K562 (cell line): ENCODE measurements at regions of chr12 and their contacts with region 1.

Region 1: DNA sequence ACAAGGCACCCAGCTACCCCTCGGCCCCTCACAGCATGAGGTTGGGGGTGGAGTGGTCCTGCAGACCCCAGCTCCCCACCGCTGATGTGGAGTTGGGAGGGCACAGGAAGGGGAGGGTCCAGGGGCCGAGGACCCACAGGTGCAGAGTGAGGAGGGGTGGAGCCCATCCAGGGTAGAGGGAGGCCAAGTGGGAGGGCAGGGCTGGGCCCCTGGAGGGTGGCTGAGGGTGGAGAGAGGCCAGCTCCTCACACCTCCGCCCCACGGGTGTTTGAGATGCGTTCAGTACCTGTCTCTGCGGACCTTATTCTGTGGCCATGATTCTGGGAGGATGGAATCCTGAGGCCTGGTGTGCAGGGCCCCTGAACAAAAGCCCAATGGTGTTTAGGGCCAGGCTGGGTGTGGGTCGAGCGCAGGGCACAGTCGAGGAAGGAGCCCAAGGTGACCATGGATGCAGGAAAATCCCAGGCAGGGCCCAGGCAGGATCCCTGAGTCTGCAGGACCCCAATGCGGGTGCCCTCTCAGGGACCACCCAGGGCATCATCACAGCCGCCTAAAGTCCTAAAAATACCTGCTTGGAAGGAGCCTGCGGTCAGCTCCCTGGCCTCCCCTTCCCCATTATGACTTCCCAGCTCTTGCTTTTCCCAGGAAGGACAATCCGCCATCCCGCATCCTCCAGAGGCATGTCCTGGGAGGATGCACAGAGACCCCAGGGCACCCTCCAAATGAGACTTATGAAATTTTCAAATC is 377.1 kb upstream of the SFSWAP start:
- DNase-seq: no peak
- ATAC-seq: no peak
- H3K4me3 ChIP-seq: no peak overlapping the region
- H3K27ac ChIP-seq: no peak overlapping the region
- H3K4me1 ChIP-seq: no peaks in the 10 kb centered on the region
- H3K27me3 ChIP-seq: peaks cover 0 to 5% of the 10 kb centered on the region in 2 experiments; a peak in 2 of 5 replicates
- CTCF ChIP-seq: no peak
- EP300 ChIP-seq: no peak
- POLR2A ChIP-seq: no peak
- RAD21 ChIP-seq: no peak

Region 2: GRCh38 chr12:131250028-131250950 is 83.5 kb before region 1 on chr12:
- CTCF ChIA-PET with region 1: no interaction called
- POLR2A ChIA-PET with region 1: no interaction called
- in situ Hi-C with region 1: no loop called
- intact Hi-C with region 1: no loop called
- DNase-seq: peak in 1 of 4 experiments; percentile 22
- ATAC-seq: peak; percentile 8; the same call in 2 of the 3 replicates
- H3K4me3 ChIP-seq: no peak overlapping the region
- H3K27ac ChIP-seq: no peak overlapping the region
- H3K4me1 ChIP-seq: peaks cover 5 to 7% of the 10 kb centered on the region in 2 experiments; a peak in 3 of 5 replicates
- H3K27me3 ChIP-seq: peaks cover 0 to 2% of the 10 kb centered on the region in 2 experiments; a peak in 1 of 5 replicates
- CTCF ChIP-seq: no peak
- EP300 ChIP-seq: no peak
- POLR2A ChIP-seq: no peak
- RAD21 ChIP-seq: no peak

Region 3: DNA sequence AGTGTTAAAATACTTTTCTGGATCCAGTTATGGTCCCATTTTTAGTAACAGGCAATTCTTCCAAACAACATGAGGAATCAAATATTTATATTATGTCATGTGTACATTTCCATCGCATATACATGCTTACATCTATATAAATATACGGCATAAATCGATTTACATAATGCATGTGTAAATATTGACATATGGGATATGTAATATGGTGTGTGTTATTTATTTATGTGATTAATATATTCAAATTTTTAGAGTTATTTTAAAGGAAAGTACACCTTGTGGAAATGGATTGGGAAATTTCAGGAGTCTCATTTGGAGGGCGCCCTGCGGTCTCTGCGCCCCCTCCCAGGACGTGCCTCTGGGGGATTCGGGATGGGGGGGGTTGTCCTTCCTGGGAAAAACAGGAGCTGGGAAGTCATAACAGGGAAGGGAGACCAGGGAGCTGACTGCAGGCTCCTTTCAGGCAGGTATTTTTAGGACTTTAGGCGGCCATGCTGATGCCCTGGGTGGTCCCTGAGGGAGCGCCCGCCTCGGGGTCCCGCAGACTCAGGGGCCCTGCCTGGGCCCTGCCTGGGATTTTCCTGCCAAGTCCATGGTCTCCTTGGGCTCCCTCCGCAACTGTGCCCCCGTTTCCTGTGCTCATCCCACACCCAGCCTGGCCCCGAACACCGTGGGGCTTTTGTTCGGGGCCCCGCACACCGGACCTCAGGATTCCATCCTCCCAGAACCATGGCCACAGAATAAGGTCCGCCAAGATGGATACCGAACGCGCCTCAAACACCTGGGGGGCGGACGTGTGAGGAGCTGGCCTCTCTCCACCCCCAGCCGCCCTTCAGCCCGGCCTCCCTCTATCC is 294.5 kb after region 1 on chr12:
- CTCF ChIA-PET with region 1: no interaction called
- POLR2A ChIA-PET with region 1: no interaction called
- in situ Hi-C with region 1: loop called (anchors 5 kb)
- intact Hi-C with region 1: no loop called
- DNase-seq: no peak
- ATAC-seq: no peak
- H3K4me3 ChIP-seq: no peak overlapping the region
- H3K27ac ChIP-seq: peak overlapping the region; percentile 48; the same call in 2 of the 3 replicates
- H3K4me1 ChIP-seq: peaks cover 17 to 46% of the 10 kb centered on the region in 2 experiments
- H3K27me3 ChIP-seq: no peaks in the 10 kb centered on the region
- CTCF ChIP-seq: no peak
- EP300 ChIP-seq: no peak
- POLR2A ChIP-seq: no peak
- RAD21 ChIP-seq: no peak